Gastrocnemius medialis (tissue), 4 donors: ENCODE measurements at regions of chr4 and their contacts with region 1.

Region 1: DNA sequence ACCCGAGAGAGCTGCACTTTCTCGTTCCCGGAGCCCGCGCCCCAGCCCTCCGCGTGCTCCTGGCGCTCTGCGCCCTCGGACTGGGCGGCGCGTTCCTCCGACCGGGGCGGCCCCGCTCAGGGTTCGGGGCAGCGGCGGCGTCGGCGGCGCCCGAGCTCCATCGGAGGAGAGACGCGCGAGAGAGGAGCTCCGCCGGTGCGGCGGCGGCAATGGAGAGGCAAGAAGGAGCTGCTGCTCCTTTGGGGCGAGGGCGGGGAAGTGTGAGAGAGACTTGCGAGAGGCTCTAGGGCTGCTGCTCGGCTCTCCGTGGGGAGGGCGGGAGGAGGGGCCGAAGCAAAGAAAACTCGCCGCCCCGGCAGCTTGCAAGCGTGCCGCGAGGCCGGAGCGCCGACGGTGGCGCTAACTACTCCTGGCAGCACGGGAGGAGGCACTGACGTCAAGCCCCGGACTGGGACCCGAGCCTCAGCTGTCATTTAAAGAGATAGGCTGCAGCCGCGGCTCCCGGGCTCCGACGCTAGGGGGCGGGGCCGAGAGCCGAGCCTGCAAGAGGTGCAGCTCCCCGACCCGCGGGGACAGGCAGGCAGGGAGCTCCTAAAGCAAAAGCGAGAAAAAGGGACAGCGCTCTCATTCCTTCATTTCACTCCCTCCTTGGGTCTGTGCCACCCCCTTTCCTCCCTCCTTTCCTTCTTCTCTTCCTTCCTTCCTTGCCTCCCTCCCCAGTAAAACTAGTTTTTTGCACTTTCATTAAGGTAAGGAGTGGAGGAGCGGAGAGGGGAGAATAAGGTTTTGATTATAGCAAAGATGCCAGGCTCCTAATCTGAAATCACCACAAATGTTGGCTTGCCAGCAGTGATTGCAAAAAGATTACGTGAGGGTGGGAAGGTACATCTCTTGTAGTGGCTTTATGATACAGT is at the start of gene KCTD8:
- DNase-seq: peak; percentile 83 to 94
- ATAC-seq: peak; percentile 78 to 80
- H3K4me3 ChIP-seq: peak within 1 kb of the TSS; percentile 63 to 83 (median 73)
- H3K27ac ChIP-seq: peak within 1 kb of the TSS; percentile 78 to 97 (median 91)
- H3K4me1 ChIP-seq: peaks cover 0 to 14% of the 10 kb centered on the region in 2 donors
- H3K27me3 ChIP-seq: peaks cover 0 to 4% (median 0%) of the 10 kb centered on the region in 3 donors
- CTCF ChIP-seq: peak; percentile 41 to 76 (median 71)
- POLR2A ChIP-seq: peak; percentile 67 to 74
- total RNA-seq, gene KCTD8: 0.71 to 2.8 (median 1.4) TPM

Region 2: GRCh38 chr4:44326741-44327140 is 122.1 kb before region 1 on chr4:
- in situ Hi-C with region 1: no loop called
- intact Hi-C with region 1: loop called (anchors 10 kb)
- DNase-seq: no peak
- ATAC-seq: peak; percentile 96 to 99
- H3K4me3 ChIP-seq: no peak overlapping the region
- H3K27ac ChIP-seq: peak overlapping the region in 1 of 4 donors; percentile 17
- H3K4me1 ChIP-seq: peaks cover 5 to 8% of the 10 kb centered on the region in 2 donors
- H3K27me3 ChIP-seq: no peaks in the 10 kb centered on the region
- CTCF ChIP-seq: no peak
- POLR2A ChIP-seq: no peak

Region 3: GRCh38 chr4:44493924-44494323 is 45.1 kb after region 1 on chr4:
- in situ Hi-C with region 1: no loop called
- intact Hi-C with region 1: loop called (anchors 1 kb)
- DNase-seq: no peak
- ATAC-seq: peak; percentile 50 to 66
- H3K4me3 ChIP-seq: no peak overlapping the region
- H3K27ac ChIP-seq: no peak overlapping the region
- H3K4me1 ChIP-seq: no peaks in the 10 kb centered on the region
- H3K27me3 ChIP-seq: no peaks in the 10 kb centered on the region
- CTCF ChIP-seq: peak in 3 of 5 experiments; percentile 12 to 35 (median 21)
- POLR2A ChIP-seq: no peak

Region 4: GRCh38 chr4:44629280-44629866 is 180.6 kb after region 1 on chr4:
- in situ Hi-C with region 1: no loop called
- intact Hi-C with region 1: loop called (anchors 2 kb)
- DNase-seq: no peak
- ATAC-seq: peak; percentile 54 to 91
- H3K4me3 ChIP-seq: no peak overlapping the region
- H3K27ac ChIP-seq: no peak overlapping the region
- H3K4me1 ChIP-seq: no peaks in the 10 kb centered on the region
- H3K27me3 ChIP-seq: no peaks in the 10 kb centered on the region
- CTCF ChIP-seq: peak in 4 of 5 experiments; percentile 32 to 66 (median 52)
- POLR2A ChIP-seq: no peak

Region 5: DNA sequence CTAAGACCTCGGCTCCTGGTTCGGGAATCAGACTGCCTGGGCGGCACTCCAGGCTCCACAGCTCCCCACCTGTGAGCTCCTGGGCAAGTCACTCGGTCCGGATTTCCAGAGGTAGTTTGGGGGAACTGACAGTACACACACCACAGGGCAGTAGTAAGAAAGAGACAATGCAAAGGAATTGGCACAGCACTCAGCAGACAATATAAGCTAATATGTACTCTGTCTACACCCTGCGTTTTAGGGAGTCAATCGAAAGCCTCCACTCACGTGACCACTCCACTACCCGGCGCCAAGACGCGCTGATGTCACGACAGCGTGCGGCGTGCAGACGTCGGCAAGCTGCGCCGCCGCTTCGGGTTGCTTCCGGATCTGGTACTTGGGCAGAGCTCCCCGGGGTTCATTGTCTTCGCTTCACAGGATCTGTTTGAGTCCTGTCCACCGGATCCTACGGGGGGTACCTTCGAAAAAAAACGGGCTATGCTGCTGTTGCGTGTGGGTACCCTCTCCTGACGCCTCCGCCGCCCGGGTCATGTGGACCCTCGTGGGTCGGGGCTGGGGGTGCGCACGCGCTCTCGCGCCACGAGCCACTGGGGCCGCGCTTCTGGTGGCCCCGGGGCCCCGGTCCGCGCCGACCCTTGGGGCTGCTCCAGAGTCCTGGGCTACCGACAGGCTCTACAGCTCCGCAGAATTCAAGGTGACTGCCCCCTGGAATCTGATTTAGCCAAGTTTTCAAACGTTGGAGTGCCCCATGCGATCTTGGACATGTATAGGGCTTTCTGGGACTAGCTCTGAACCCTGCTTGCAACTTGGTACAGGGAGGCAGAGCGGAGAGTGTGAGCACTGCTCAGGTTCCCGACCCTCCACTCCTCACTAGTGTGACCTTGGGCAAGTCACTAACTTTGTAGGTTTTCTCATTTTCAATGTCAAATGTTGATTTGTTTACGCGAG is 229.6 kb after region 1 on chr4 and contains the start of gene GUF1:
- in situ Hi-C with region 1: no loop called
- intact Hi-C with region 1: loop called (anchors 2 kb)
- DNase-seq: peak; percentile 85 to 86
- ATAC-seq: peak; percentile 96 to 97
- H3K4me3 ChIP-seq: peak within 1 kb of the TSS; percentile 67 to 90 (median 72)
- H3K27ac ChIP-seq: peak within 1 kb of the TSS; percentile 87 to 97 (median 90)
- H3K4me1 ChIP-seq: peaks cover 19 to 26% of the 10 kb centered on the region in 2 donors
- H3K27me3 ChIP-seq: no peaks in the 10 kb centered on the region
- CTCF ChIP-seq: peak in 2 of 5 experiments; percentile 15 to 43
- POLR2A ChIP-seq: peak; percentile 63 to 64
- total RNA-seq, gene GUF1: 16.4 to 25.3 (median 18.9) TPM

Region 6: GRCh38 chr4:44806071-44806470 is 357.3 kb after region 1 on chr4:
- in situ Hi-C with region 1: no loop called
- intact Hi-C with region 1: no loop called
- DNase-seq: no peak
- ATAC-seq: no peak
- H3K4me3 ChIP-seq: no peak overlapping the region
- H3K27ac ChIP-seq: no peak overlapping the region
- H3K4me1 ChIP-seq: no peaks in the 10 kb centered on the region
- H3K27me3 ChIP-seq: no peaks in the 10 kb centered on the region
- CTCF ChIP-seq: no peak
- POLR2A ChIP-seq: no peak

Region 7: DNA sequence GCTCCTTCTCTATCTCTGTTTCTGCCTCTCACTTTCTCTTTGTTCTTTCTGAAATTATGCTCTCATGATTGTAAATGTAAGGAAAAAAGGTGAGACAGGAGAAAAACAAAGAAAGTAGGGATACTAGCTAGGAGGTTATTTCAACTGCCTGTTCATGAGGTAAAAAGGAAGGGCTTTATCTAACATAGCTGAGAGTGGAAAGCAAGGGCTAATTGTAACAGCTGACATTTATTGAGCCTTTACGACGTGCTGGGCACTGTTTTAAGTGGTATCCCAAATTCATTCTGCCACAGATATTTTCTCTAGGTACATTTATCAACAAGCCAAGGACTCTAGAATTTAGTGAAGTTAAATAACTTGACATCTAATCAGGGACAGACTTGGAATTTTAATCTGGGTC is 410.7 kb after region 1 on chr4:
- in situ Hi-C with region 1: no loop called
- intact Hi-C with region 1: no loop called
- DNase-seq: no peak
- ATAC-seq: no peak
- H3K4me3 ChIP-seq: no peak overlapping the region
- H3K27ac ChIP-seq: no peak overlapping the region
- H3K4me1 ChIP-seq: no peaks in the 10 kb centered on the region
- H3K27me3 ChIP-seq: no peaks in the 10 kb centered on the region
- CTCF ChIP-seq: no peak
- POLR2A ChIP-seq: no peak